ENCODE measurements at regions of chr12 and their contacts with region 1.

Region 1: GRCh38 chr12:49188914-49189367 is at the start of gene TUBA1A:
- DNase-seq: peak; percentile 89 to 99
- ATAC-seq: peak; percentile 85 to 95 (median 88)
- H3K4me3 ChIP-seq: peak within 1 kb of the TSS; percentile 91
- H3K4me3 Mint-ChIP-seq: peak within 1 kb of the TSS; percentile 97
- H3K27ac ChIP-seq: peak within 1 kb of the TSS; percentile 98
- H3K27ac Mint-ChIP-seq: peak within 1 kb of the TSS; percentile 96
- H3K4me1 ChIP-seq: peaks cover 10% of the 10 kb centered on the region
- H3K4me1 Mint-ChIP-seq: peaks cover 21 to 25% of the 10 kb centered on the region in 2 donors
- H3K27me3 ChIP-seq: no peaks in the 10 kb centered on the region
- H3K27me3 Mint-ChIP-seq: no peaks in the 10 kb centered on the region
- CTCF ChIP-seq: no peak
- total RNA-seq, gene TUBA1A: 129 to 403 (median 182) TPM

Region 2: GRCh38 chr12:48527891-48528675 is 660.9 kb before region 1 on chr12:
- intact Hi-C with region 1: no loop called
- DNase-seq: no peak
- ATAC-seq: no peak
- H3K4me3 ChIP-seq: no peak overlapping the region
- H3K4me3 Mint-ChIP-seq: no peak overlapping the region
- H3K27ac ChIP-seq: no peak overlapping the region
- H3K27ac Mint-ChIP-seq: no peak overlapping the region
- H3K4me1 ChIP-seq: no peaks in the 10 kb centered on the region
- H3K4me1 Mint-ChIP-seq: no peaks in the 10 kb centered on the region
- H3K27me3 ChIP-seq: no peaks in the 10 kb centered on the region
- H3K27me3 Mint-ChIP-seq: peaks cover 11 to 29% of the 10 kb centered on the region in 2 donors
- CTCF ChIP-seq: no peak

Region 3: GRCh38 chr12:49069507-49070346 is 119.2 kb before region 1 on chr12 and contains the start of gene RHEBL1:
- intact Hi-C with region 1: loop called (anchors 5 kb)
- DNase-seq: peak; percentile 97 to 99
- ATAC-seq: peak; percentile 97 to 100 (median 99)
- H3K4me3 ChIP-seq: peak within 1 kb of the TSS; percentile 83
- H3K4me3 Mint-ChIP-seq: peak within 1 kb of the TSS; percentile 99
- H3K27ac ChIP-seq: peak within 1 kb of the TSS; percentile 84
- H3K27ac Mint-ChIP-seq: peak within 1 kb of the TSS; percentile 97 to 98
- H3K4me1 ChIP-seq: peaks cover 15% of the 10 kb centered on the region
- H3K4me1 Mint-ChIP-seq: peaks cover 11 to 18% of the 10 kb centered on the region in 2 donors
- H3K27me3 ChIP-seq: no peaks in the 10 kb centered on the region
- H3K27me3 Mint-ChIP-seq: no peaks in the 10 kb centered on the region
- CTCF ChIP-seq: no peak
- total RNA-seq, gene RHEBL1: 6.3 to 11.6 (median 11.1) TPM

Region 4: DNA sequence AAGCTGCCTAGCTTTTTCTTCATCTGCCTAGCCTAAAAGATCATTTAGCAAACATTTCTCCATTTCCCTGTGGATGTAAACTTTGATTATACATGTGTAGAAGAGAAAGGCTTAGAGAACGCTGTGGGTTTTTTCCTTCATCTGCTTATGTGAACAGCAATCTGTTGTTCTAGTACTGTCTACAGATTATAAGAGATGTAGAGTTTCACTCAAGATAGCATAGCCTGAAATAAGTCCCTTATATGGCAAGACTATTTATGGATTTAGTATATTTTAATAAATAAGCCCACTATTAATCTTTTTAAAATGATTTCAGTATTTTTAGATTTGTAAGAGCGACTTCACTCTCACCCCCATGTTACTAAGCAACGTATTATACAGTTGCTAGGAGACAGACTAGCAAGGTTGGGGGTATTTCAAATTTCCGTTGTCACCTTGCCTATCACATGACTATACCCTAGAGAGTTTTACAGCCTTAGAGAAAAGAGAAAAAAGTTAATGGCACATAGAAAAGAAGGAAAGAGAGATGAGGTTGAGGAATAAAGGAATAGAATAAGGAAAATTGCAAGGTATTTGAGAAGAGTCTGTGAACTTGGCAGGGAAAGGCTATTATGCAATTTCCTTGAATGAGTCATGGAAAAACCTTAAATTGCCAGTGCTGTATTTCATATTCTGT is 12.1 kb after region 1 on chr12:
- intact Hi-C with region 1: loop called (anchors 1 kb)
- DNase-seq: peak in 1 of 2 donors; percentile 71
- ATAC-seq: peak; percentile 81 to 98 (median 92)
- H3K4me3 ChIP-seq: no peak overlapping the region
- H3K4me3 Mint-ChIP-seq: no peak overlapping the region
- H3K27ac ChIP-seq: no peak overlapping the region
- H3K27ac Mint-ChIP-seq: peak overlapping the region; percentile 1 to 59
- H3K4me1 ChIP-seq: no peaks in the 10 kb centered on the region
- H3K4me1 Mint-ChIP-seq: peaks cover 6 to 12% of the 10 kb centered on the region in 2 donors
- H3K27me3 ChIP-seq: no peaks in the 10 kb centered on the region
- H3K27me3 Mint-ChIP-seq: no peaks in the 10 kb centered on the region
- CTCF ChIP-seq: no peak

Region 5: DNA sequence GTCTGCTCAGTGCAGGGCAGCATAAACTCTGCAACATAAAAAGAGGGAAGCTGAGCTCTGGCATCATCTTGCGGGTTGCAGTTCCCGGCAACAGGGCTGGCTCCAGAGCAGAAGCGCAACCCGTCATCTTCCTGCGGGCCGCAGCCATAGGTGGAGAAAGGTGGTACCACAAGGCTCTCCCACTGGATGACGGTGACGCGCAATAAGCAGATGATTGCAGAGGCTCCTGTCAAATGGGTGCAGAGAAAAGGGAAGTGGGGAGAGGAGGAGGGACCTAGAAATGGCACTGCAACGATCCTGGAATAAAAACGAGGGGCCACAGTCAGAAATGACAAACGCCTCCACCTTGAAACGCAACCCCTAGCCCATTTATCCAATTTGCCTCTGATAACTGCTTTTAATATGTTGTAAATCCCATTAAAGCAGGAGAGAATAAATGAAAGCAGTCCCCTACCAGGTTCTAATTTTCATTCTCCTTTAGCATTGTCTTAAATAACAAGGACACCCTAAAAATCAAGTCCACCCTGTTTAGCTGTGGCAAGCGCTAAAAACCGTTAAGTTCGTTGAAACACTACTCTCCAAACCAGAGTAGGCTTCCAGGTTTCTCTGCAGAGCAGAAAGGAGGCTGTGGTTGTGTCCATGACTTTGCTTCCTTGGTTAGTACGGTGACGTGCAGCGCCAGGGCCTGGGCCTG is 45.0 kb after region 1 on chr12:
- intact Hi-C with region 1: loop called (anchors 2 kb)
- DNase-seq: peak; percentile 20 to 33
- ATAC-seq: peak in 1 of 3 donors; percentile 63
- H3K4me3 ChIP-seq: peak overlapping the region; percentile 2
- H3K4me3 Mint-ChIP-seq: peak overlapping the region; percentile 68
- H3K27ac ChIP-seq: peak overlapping the region; percentile 79
- H3K27ac Mint-ChIP-seq: peak overlapping the region; percentile 84 to 86
- H3K4me1 ChIP-seq: peaks cover 19% of the 10 kb centered on the region
- H3K4me1 Mint-ChIP-seq: peaks cover 0 to 13% of the 10 kb centered on the region in 2 donors
- H3K27me3 ChIP-seq: no peaks in the 10 kb centered on the region
- H3K27me3 Mint-ChIP-seq: no peaks in the 10 kb centered on the region
- CTCF ChIP-seq: no peak

Region 6: GRCh38 chr12:49314811-49315210 is 125.9 kb after region 1 on chr12:
- intact Hi-C with region 1: no loop called
- DNase-seq: no peak
- ATAC-seq: no peak
- H3K4me3 ChIP-seq: no peak overlapping the region
- H3K4me3 Mint-ChIP-seq: no peak overlapping the region
- H3K27ac ChIP-seq: no peak overlapping the region
- H3K27ac Mint-ChIP-seq: no peak overlapping the region
- H3K4me1 ChIP-seq: no peaks in the 10 kb centered on the region
- H3K4me1 Mint-ChIP-seq: no peaks in the 10 kb centered on the region
- H3K27me3 ChIP-seq: peaks cover 3% of the 10 kb centered on the region
- H3K27me3 Mint-ChIP-seq: peaks cover 0 to 5% of the 10 kb centered on the region in 2 donors
- CTCF ChIP-seq: no peak